AG04449 (cell line): ENCODE measurements at regions of chr18 and their contacts with region 1.

Region 1: GRCh38 chr18:45879681-45880655 is 54.5 kb downstream of the SIGLEC15 start:
- DNase-seq: no peak
- H3K4me3 ChIP-seq: no peak overlapping the region
- CTCF ChIP-seq: peak; percentile 100

Region 2: DNA sequence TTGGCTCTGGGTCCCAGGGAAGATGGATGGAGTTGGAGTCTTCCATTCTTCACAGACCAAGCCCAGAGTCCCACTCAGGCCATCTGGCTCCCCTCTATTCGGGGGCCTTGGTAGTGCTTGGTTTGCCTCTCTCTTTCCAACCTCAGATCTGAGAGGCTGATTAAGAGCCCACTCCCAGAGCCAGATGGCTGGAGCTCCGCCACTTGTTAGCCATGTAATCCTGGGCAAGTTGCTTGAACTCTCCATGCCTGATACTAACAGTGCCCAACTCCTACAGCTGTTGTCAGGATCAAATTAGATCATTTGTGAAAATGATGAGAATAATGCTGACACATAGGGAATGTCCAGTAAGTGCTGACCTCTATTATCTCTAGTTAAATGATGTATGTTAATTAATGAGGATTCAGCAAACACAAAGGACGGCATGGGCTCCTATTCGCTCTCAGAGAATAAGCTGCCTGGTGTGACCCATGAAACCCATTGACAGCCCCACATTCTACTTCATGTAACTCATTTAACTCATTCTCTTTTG is 202.6 kb before region 1 on chr18:
- CTCF ChIA-PET with region 1: interaction called, 16 read pairs
- POLR2A ChIA-PET with region 1: no interaction called
- DNase-seq: no peak
- H3K4me3 ChIP-seq: no peak overlapping the region
- CTCF ChIP-seq: no peak

Region 3: GRCh38 chr18:45712061-45712460 is 167.9 kb before region 1 on chr18:
- CTCF ChIA-PET with region 1: interaction called, 10 read pairs
- POLR2A ChIA-PET with region 1: no interaction called
- DNase-seq: no peak
- H3K4me3 ChIP-seq: no peak overlapping the region
- CTCF ChIP-seq: no peak

Region 4: DNA sequence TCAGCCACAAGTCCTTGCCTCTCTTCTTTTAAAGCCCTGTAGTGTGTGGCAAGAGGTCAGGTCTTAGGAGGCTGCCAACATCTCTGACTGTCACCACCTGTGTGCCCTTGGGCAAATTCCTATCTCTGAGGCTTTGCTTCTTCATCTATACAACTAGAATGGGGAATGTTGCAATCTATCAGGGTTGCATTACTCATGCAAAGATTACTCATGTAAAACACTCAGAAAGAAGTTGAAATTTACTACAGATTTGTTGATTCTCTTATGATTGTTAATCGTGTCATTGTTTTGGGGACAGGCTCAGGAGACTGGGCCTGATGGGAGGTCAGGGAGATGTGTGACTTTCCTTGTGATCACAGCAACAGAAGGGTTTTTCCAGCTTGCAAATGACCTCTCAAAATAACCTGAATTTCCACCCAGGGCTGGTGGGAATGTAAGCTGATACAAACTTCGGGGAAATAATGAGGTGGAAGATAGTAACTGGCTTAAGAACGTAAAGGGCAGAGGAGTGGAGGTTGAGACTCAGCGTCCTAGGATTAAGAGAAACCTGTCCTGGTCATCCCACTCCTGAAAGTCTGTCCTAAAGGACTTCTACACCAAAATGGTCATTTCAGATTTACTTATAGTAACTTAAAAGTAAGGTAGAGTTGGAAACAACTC is 86.5 kb before region 1 on chr18:
- CTCF ChIA-PET with region 1: no interaction called
- POLR2A ChIA-PET with region 1: no interaction called
- DNase-seq: peak; percentile 73
- H3K4me3 ChIP-seq: no peak overlapping the region
- CTCF ChIP-seq: no peak

Region 5: GRCh38 chr18:45850021-45850420 is 29.9 kb before region 1 on chr18:
- CTCF ChIA-PET with region 1: interaction called, 202 read pairs
- POLR2A ChIA-PET with region 1: no interaction called
- DNase-seq: no peak
- H3K4me3 ChIP-seq: no peak overlapping the region
- CTCF ChIP-seq: peak; percentile 44

Region 6: DNA sequence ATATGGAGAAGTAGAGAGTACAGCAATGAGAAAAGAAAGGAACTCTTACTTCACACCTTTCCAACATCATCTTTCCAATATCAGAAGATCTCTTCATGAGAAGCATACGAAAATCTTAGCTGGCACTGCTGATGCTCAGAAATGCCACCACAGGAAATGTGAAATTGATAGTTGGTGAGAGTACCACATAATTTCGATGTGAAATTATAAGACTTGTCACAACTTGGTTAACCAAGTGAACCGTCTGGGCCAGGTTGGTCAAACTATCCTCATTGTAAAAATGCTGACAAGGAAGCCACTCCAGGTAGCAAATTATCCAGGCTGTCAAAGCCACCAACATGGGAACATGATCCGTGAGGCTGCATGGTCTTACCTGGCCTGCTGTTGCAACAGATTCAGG is 20.7 kb after region 1 on chr18:
- CTCF ChIA-PET with region 1: interaction called, 73 read pairs
- POLR2A ChIA-PET with region 1: no interaction called
- DNase-seq: no peak
- H3K4me3 ChIP-seq: no peak overlapping the region
- CTCF ChIP-seq: no peak

Region 7: DNA sequence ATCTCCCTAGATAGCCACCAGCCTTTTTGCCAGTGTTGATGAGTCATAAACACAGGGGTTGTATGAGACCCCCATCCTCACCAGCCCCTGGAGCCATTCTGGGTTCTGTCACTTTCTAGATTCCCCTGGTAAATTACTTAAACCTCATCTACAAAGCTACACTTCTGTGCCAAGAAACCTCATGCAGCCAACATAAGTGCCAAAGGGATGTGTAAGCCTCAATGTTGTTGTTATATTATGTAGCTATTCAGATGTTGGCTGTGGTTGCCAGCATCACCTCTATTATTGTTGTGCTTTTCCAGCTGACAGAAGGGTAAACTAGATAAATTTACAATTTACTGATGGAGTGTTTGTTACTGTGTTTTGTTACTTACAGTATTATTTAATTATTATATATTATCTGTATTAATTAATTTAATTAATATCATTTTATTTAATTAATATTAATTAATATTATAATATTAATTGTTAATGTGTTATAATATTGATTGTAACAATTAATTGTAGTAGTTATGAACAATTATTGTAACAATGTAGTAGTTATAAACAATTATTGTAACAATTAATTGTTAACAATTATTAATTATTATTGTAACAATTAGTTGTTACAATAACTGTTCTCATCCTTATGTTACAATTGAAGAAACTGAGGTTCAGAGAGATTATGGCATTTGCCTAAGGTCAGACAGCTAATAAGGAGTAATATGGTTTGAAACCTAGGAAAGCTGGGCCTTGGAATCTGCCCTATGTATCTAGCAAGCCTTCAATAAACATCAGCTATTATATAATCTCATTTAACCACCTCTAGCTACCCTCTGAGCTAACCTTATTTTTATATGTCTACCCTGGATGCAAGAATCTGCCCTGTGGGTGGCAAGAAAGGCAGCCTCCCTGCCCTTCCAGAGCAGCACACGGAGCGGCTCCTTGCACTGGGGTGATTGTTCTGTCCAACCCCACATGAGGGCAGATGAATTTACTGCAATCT is 156.0 kb after region 1 on chr18:
- CTCF ChIA-PET with region 1: no interaction called
- POLR2A ChIA-PET with region 1: no interaction called
- DNase-seq: no peak
- H3K4me3 ChIP-seq: no peak overlapping the region
- CTCF ChIP-seq: no peak

Region 8: DNA sequence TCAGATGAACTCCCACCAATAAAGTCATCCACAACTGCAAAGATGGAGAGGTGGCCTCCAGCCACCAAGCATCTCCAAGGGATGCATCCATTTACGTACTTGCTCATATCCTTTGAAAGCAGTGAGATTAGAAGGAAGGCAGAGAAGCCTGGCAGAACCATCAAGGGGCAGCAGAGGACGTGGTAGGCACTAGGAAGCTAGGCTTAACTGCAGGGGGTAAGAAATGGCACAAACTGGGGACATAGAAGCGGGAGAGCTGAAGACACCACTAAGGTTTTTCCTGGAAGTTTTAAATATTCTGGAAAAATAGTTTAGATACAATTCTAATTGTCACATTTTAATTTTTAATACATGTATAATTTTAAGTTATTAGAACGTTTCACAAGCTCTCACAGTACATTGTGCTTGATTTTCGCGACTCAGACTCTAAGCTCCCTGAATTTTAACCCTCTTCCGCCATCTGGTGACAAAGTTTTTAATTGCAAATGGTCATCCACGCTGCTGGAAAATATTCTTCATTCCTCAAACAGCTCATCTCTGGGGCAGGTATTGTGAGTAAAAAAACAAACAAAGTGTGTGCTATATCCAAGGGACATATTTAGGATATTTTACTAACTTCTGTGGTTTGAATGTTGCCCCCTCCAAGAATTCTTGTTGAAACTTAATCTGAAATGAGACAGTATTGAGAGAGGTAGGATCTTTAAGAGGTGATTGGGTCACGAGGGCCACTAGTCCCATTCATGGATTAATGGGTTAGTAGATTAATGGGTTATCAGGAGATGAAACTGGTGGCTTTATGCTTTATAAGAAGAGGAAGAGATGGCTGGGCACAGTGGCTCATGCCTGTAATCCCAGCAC is 193.7 kb after region 1 on chr18:
- CTCF ChIA-PET with region 1: interaction called, 10 read pairs
- POLR2A ChIA-PET with region 1: no interaction called
- DNase-seq: no peak
- H3K4me3 ChIP-seq: no peak overlapping the region
- CTCF ChIP-seq: peak; percentile 43